ENCODE measurements at regions of chr7 and their contacts with region 1.

Region 1: GRCh38 chr7:94069162-94069739 is 65.1 kb upstream of the BET1 start:
- DNase-seq: no peak
- ATAC-seq: no peak
- H3K4me3 ChIP-seq: no peak overlapping the region
- H3K27ac ChIP-seq: no peak overlapping the region
- H3K4me1 ChIP-seq: no peaks in the 10 kb centered on the region
- H3K27me3 ChIP-seq: peaks cover 0 to 8% (median 0%) of the 10 kb centered on the region in 9 donors
- CTCF ChIP-seq: no peak
- POLR2A ChIP-seq: no peak

Region 2: GRCh38 chr7:93799750-93800357 is 269.4 kb before region 1 on chr7:
- intact Hi-C with region 1: loop called in 1 of 10 experiments (anchors 10 kb)
- DNase-seq: no peak
- ATAC-seq: no peak
- H3K4me3 ChIP-seq: no peak overlapping the region
- H3K27ac ChIP-seq: no peak overlapping the region
- H3K4me1 ChIP-seq: no peaks in the 10 kb centered on the region
- H3K27me3 ChIP-seq: no peaks in the 10 kb centered on the region
- CTCF ChIP-seq: peak in 10 of 12 donors; percentile 29 to 60 (median 38)
- POLR2A ChIP-seq: no peak